ENCODE measurements at regions of chr3 and their contacts with region 1.

Region 1: GRCh38 chr3:155701882-155702465 is 42.9 kb downstream of the PLCH1 start:
- DNase-seq: no peak
- ATAC-seq: peak in 3 of 4 donors; percentile 53 to 79 (median 74)
- H3K4me3 ChIP-seq: peak overlapping the region in 1 of 12 donors; percentile 2
- H3K27ac ChIP-seq: peak overlapping the region in 4 of 12 donors; percentile 3 to 29 (median 14)
- H3K4me1 ChIP-seq: peaks cover 0 to 5% (median 0%) of the 10 kb centered on the region in 12 donors
- H3K27me3 ChIP-seq: no peaks in the 10 kb centered on the region
- CTCF ChIP-seq: peak; percentile 62 to 78 (median 69)
- POLR2A ChIP-seq: no peak

Region 2: DNA sequence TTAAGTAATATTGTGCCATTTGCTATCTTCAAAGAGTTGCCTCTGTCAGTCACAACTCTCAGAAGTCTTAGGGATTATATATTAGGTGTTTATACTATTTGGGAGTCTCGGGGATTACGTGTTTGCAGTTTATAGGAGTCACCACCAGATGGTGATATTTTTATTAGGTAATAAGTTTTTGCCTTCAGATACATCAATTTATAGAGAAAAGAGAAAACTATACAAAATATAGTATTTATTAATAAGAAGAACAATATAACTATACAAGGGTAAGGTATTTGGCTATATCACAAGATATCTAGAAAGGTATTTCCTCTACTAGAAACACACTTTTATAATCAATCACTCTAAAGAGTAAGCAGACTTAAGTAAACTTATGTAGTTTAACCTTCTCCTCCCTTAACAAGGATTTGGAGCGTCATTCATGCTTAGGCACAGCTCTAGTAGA is 1367.0 kb before region 1 on chr3:
- intact Hi-C with region 1: loop called in 9 of 10 experiments (anchors 5 to 10 kb)
- DNase-seq: no peak
- ATAC-seq: no peak
- H3K4me3 ChIP-seq: no peak overlapping the region
- H3K27ac ChIP-seq: no peak overlapping the region
- H3K4me1 ChIP-seq: no peaks in the 10 kb centered on the region
- H3K27me3 ChIP-seq: peaks cover 0 to 2% (median 0%) of the 10 kb centered on the region in 9 donors
- CTCF ChIP-seq: peak; percentile 35 to 82 (median 61)
- POLR2A ChIP-seq: no peak

Region 3: GRCh38 chr3:154758109-154758868 is 943.7 kb before region 1 on chr3:
- intact Hi-C with region 1: loop called in 6 of 10 experiments (anchors 5 to 10 kb)
- DNase-seq: no peak
- ATAC-seq: no peak
- H3K4me3 ChIP-seq: no peak overlapping the region
- H3K27ac ChIP-seq: peak overlapping the region in 1 of 12 donors; percentile 12
- H3K4me1 ChIP-seq: peaks cover 0 to 3% (median 0%) of the 10 kb centered on the region in 12 donors
- H3K27me3 ChIP-seq: no peaks in the 10 kb centered on the region
- CTCF ChIP-seq: peak; percentile 9 to 68 (median 48)
- POLR2A ChIP-seq: no peak

Region 4: GRCh38 chr3:154766765-154767503 is 935.0 kb before region 1 on chr3:
- intact Hi-C with region 1: loop called in 1 of 10 experiments (anchors 10 kb)
- DNase-seq: no peak
- ATAC-seq: no peak
- H3K4me3 ChIP-seq: no peak overlapping the region
- H3K27ac ChIP-seq: no peak overlapping the region
- H3K4me1 ChIP-seq: peaks cover 0 to 7% (median 0%) of the 10 kb centered on the region in 12 donors
- H3K27me3 ChIP-seq: no peaks in the 10 kb centered on the region
- CTCF ChIP-seq: no peak
- POLR2A ChIP-seq: no peak

Region 5: DNA sequence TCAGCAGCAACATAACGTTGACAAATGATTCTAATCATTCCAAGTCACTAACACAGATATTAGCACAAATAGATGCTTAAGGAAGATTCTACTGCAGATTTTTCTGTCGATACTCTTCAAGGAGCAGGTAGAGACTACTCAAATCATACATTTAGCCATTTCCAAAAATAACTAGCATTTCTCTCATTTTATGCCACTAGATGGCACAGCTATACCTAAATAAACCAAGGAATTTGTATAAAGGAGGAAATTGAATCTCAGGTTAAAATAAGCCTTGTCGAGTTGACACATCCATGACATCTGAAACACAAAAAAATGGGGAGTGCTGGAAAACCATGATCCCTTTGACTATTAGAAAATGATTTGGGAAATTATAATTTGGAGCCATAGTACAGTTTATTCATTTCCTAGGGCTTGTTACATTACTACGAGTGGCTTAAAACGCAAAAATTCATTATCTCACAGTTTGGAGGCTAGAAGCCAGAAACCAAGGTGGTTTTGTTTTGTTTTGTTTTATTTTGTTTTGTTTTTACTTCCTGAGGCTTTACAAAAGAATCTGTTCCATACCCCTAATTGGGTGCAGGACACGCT is 349.0 kb before region 1 on chr3:
- intact Hi-C with region 1: loop called in 9 of 10 experiments (anchors 1 to 5 kb)
- DNase-seq: no peak
- ATAC-seq: peak in 1 of 4 donors; percentile 36
- H3K4me3 ChIP-seq: no peak overlapping the region
- H3K27ac ChIP-seq: no peak overlapping the region
- H3K4me1 ChIP-seq: no peaks in the 10 kb centered on the region
- H3K27me3 ChIP-seq: no peaks in the 10 kb centered on the region
- CTCF ChIP-seq: peak; percentile 32 to 63 (median 52)
- POLR2A ChIP-seq: no peak

Region 6: DNA sequence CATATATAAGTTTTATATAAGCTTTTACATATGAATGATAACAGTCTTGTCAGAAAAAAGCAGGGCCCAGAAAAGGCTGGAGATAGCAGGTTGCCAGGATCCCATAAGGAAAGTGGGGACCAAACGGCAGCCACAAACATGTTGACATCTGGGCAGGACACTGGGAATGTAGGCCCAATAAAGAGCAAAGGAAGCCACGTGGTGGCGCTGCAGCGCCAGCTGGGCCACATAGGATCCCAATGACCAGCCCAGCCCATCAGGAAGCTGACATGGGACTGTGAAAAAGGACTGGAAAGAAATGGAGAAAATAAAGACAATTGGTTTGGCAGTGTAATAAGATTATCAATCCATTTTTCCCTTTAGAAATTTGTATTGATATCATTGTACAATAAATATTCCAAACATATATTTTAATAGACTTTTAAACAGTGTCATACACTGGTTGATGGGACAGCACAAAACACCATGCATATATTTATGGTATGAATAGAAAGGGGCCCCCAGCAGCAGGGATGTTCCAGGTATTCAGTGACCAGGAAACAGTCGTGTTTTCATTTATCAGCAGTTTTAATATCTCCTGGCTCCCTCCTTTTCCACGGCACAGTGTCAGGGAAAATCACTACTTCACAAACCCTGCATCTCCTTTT is 319.5 kb before region 1 on chr3:
- intact Hi-C with region 1: loop called (anchors 1 to 10 kb)
- DNase-seq: peak; percentile 55 to 85 (median 61)
- ATAC-seq: peak; percentile 83 to 92 (median 88)
- H3K4me3 ChIP-seq: no peak overlapping the region
- H3K27ac ChIP-seq: no peak overlapping the region
- H3K4me1 ChIP-seq: peaks cover 0 to 14% (median 0%) of the 10 kb centered on the region in 12 donors
- H3K27me3 ChIP-seq: no peaks in the 10 kb centered on the region
- CTCF ChIP-seq: peak; percentile 48 to 77 (median 60)
- POLR2A ChIP-seq: no peak

Region 7: DNA sequence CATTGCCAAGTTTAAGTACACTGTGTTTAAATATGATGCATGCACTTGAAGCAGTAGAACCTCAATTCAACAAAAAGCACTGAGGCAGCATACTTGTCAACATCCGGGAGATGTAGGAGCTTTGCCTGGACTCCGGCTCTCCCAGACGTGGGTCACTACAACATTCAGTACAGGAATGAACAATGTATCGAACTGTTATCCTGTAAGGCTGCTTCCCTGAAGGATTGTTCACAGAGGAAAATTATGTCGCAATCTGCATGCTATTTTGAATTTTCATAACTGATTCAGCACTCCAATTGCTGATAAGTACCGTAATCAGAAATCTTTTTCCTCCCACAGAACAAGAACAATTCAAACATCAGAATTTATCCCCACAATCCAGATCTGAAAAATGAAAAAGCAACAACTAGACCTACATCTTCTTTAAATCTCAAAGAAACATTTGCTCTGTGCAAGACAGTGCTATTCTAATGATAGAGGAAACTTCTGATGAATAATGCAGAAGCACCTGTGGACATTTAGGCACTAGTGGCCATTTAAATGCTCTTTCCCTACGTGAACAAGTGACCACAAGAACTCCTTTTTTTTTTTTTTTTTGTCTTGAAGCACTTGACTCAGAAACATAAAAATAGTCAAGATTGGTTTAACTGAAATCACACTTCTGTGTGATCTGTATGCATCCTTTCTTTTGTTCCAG is 70.5 kb before region 1 on chr3:
- intact Hi-C with region 1: no loop called
- DNase-seq: no peak
- ATAC-seq: no peak
- H3K4me3 ChIP-seq: no peak overlapping the region
- H3K27ac ChIP-seq: no peak overlapping the region
- H3K4me1 ChIP-seq: no peaks in the 10 kb centered on the region
- H3K27me3 ChIP-seq: no peaks in the 10 kb centered on the region
- CTCF ChIP-seq: no peak
- POLR2A ChIP-seq: no peak

Region 8: GRCh38 chr3:155917781-155918180 is 215.8 kb after region 1 on chr3:
- intact Hi-C with region 1: no loop called
- DNase-seq: no peak
- ATAC-seq: no peak
- H3K4me3 ChIP-seq: no peak overlapping the region
- H3K27ac ChIP-seq: no peak overlapping the region
- H3K4me1 ChIP-seq: peaks cover 0 to 5% (median 0%) of the 10 kb centered on the region in 12 donors
- H3K27me3 ChIP-seq: no peaks in the 10 kb centered on the region
- CTCF ChIP-seq: no peak
- POLR2A ChIP-seq: no peak